Heart left ventricle (tissue), 16 donors: ENCODE measurements at regions of chr19 and their contacts with region 1.

Region 1: DNA sequence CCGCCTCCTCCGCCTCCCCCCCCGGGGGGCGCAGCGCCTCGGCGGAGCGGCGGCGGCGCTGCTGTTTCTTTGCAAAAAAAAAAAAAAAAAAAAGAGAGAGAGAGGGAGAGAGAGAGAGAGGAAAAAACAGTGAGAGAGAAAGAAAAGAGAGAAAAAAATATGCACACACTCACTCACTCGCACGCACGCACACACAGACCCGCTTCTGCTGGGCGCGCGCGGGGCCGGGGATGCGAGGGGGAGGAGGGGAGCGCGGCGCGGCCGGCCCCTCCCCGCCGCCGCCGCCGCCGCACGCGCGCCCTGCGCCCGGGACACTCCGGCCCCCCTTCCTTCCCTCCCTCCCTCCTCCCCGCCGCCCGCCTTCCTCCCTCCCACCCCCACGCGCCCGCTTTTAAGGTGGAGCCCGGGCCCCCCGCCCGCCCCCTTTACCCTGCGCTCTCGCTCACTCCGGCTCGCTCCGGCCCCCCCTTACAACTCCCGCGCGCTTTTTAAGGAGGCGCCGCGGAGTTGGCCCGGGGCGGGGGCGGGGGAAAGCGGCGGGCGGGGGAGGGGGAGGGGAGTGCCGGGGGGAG is at the start of gene SAMD1:
- DNase-seq: peak; percentile 94 to 97 (median 94)
- ATAC-seq: peak; percentile 67 to 74 (median 72)
- H3K4me3 ChIP-seq: peak within 1 kb of the TSS; percentile 61 to 96 (median 88)
- H3K27ac ChIP-seq: peak within 1 kb of the TSS; percentile 89 to 99 (median 96)
- H3K4me1 ChIP-seq: peaks cover 0 to 19% (median 12%) of the 10 kb centered on the region in 12 donors
- H3K27me3 ChIP-seq: no peaks in the 10 kb centered on the region
- CTCF ChIP-seq: no peak
- POLR2A ChIP-seq: no peak
- total RNA-seq, gene SAMD1: 30.5 to 55.5 (median 38.3) TPM

Region 2: GRCh38 chr19:14117668-14118164 is 27.1 kb after region 1 on chr19 and contains the start of gene PRKACA:
- intact Hi-C with region 1: loop called in 1 of 10 experiments (anchors 2 kb)
- DNase-seq: peak; percentile 99 to 100 (median 100)
- ATAC-seq: peak; percentile 87 to 94 (median 92)
- H3K4me3 ChIP-seq: peak within 1 kb of the TSS; percentile 52 to 98 (median 92)
- H3K27ac ChIP-seq: peak within 1 kb of the TSS; percentile 93 to 100 (median 99)
- H3K4me1 ChIP-seq: peaks cover 27 to 67% (median 58%) of the 10 kb centered on the region in 12 donors
- H3K27me3 ChIP-seq: no peaks in the 10 kb centered on the region
- CTCF ChIP-seq: no peak
- POLR2A ChIP-seq: peak in 1 of 2 donors; percentile 72
- total RNA-seq, gene PRKACA: 216 to 554 (median 459) TPM